ENCODE measurements at regions of chr2 and their contacts with region 1.

Region 1: GRCh38 chr2:10338270-10339188 is 35.8 kb downstream of the HPCAL1 start:
- DNase-seq: no peak
- ATAC-seq: no peak
- H3K4me3 ChIP-seq: no peak overlapping the region
- H3K27ac ChIP-seq: no peak overlapping the region
- H3K4me1 ChIP-seq: peaks cover 34% of the 10 kb centered on the region
- H3K27me3 ChIP-seq: no peaks in the 10 kb centered on the region
- CTCF ChIP-seq: no peak

Region 2: GRCh38 chr2:10225291-10226037 is 113.1 kb before region 1 on chr2:
- CTCF ChIA-PET with region 1: no interaction called
- POLR2A ChIA-PET with region 1: no interaction called
- intact Hi-C with region 1: no loop called
- DNase-seq: no peak
- ATAC-seq: no peak
- H3K4me3 ChIP-seq: no peak overlapping the region
- H3K27ac ChIP-seq: no peak overlapping the region
- H3K4me1 ChIP-seq: peaks cover 14% of the 10 kb centered on the region
- H3K27me3 ChIP-seq: no peaks in the 10 kb centered on the region
- CTCF ChIP-seq: no peak

Region 3: GRCh38 chr2:10269711-10270610 is 68.6 kb before region 1 on chr2:
- CTCF ChIA-PET with region 1: no interaction called
- POLR2A ChIA-PET with region 1: no interaction called
- intact Hi-C with region 1: loop called (anchors 1 kb)
- DNase-seq: no peak
- ATAC-seq: peak; percentile 12; the same call in 1 of the 2 replicates
- H3K4me3 ChIP-seq: no peak overlapping the region
- H3K27ac ChIP-seq: no peak overlapping the region
- H3K4me1 ChIP-seq: peaks cover 31% of the 10 kb centered on the region
- H3K27me3 ChIP-seq: no peaks in the 10 kb centered on the region
- CTCF ChIP-seq: no peak